ENCODE measurements at regions of chr3 and their contacts with region 1.

Region 1: GRCh38 chr3:192933779-192934460 is 16.3 kb upstream of the MB21D2 start:
- DNase-seq: peak; percentile 73
- ATAC-seq: peak; percentile 64
- H3K4me3 ChIP-seq: no peak overlapping the region
- H3K27ac ChIP-seq: no peak overlapping the region; the same call in 1 of the 2 replicates
- H3K4me1 ChIP-seq: peaks cover 10% of the 10 kb centered on the region
- H3K27me3 ChIP-seq: no peaks in the 10 kb centered on the region
- CTCF ChIP-seq: no peak
- POLR2A ChIP-seq: no peak
- RAD21 ChIP-seq: no peak

Region 2: DNA sequence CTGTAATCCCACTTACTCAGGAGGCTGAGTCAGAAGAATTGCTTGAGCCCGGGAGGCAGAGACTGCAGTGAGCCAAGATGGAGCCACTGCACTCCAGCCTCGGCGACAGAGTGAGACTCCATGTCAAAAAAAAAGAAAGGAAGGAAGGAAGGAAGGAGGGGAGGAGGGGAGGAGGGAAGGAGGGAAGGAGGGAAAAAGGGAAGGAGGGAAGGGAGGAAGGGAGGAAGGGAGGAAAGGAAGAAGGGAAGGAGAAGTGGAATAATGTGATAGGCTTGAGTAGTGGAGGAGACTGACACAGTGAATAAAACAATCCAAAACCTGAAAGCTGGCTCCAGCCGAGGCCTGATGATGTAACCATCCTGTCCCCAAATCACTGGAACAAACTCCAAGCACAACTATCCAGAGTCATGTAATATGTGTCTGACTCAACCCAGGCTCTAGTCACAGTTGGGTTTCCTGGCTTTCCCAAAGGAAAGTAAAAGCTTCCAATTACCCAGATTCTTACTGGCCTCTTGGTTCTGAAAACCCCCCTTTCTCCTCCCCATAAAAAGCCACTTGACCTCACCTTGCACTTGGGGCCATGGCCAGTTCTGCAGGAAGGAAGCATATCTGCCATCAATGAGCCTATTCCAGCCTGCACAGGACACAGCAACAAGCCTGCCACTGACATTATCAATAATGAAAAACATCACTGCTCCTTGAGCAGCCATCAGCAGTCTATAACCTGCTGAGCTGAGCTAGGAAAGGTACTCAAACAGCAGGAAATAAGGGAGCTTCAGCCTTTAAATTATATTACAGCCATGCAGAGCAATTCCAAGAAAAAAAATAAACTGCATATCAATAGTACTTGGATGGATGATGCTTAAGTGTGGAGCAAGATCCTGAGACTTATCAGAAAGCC is 64.5 kb before region 1 on chr3:
- CTCF ChIA-PET with region 1: no interaction called
- POLR2A ChIA-PET with region 1: interaction called, 11 read pairs
- dilution Hi-C with region 1: no loop called
- in situ Hi-C with region 1: no loop called
- intact Hi-C with region 1: no loop called
- DNase-seq: peak; percentile 67
- ATAC-seq: peak; percentile 73
- H3K4me3 ChIP-seq: no peak overlapping the region
- H3K27ac ChIP-seq: 0 out of 2 replicates have a peak overlapping the region, but pooled peaks have one; percentile 3
- H3K4me1 ChIP-seq: peaks cover 18% of the 10 kb centered on the region
- H3K27me3 ChIP-seq: no peaks in the 10 kb centered on the region
- CTCF ChIP-seq: no peak
- POLR2A ChIP-seq: no peak
- RAD21 ChIP-seq: no peak

Region 3: GRCh38 chr3:193016437-193016901 is 82.5 kb after region 1 on chr3:
- CTCF ChIA-PET with region 1: no interaction called
- POLR2A ChIA-PET with region 1: no interaction called
- dilution Hi-C with region 1: no loop called
- in situ Hi-C with region 1: no loop called
- intact Hi-C with region 1: no loop called
- DNase-seq: no peak
- ATAC-seq: no peak
- H3K4me3 ChIP-seq: no peak overlapping the region
- H3K27ac ChIP-seq: no peak overlapping the region
- H3K4me1 ChIP-seq: no peaks in the 10 kb centered on the region
- H3K27me3 ChIP-seq: no peaks in the 10 kb centered on the region; the same call in 1 of the 2 replicates
- CTCF ChIP-seq: no peak
- POLR2A ChIP-seq: no peak
- RAD21 ChIP-seq: no peak